AG04450 (cell line): ENCODE measurements at regions of chr14 and their contacts with region 1.

Region 1: DNA sequence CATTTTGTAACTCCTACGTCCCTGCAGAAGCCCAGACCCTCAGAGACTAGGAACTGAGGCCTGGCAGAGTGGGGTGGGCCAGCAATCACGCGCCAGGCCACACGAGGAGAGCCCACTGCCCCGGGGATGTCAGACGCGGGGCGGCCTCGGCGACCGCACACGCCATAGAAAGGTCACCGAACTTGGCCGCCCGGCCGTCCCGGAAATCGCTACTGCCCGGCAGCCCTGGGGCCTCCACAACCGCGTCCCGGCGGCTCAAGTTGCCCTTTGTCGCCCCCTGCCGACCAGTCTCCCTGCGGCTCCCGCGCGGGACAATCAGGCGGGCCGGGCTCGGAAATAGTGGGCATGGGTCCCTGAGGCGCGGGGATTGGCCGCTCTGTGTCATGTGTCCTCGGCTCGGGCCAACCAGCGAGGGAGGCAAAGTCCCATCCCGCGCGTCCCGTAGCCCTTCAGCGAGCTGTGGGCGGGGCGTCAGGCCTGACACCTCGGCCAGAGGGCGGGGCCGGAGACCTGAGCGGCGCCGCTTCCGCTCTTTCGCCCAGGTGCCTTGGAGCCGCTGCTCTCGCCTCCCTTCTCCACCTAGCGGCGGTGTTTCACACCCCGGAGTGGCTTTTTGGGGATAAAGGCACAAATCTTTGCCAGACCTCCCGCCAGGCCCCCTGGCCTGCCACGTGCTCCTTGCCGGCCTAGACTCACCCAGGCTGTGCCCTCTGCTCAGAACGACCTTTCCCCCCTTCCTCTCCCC is 33.4 kb upstream of the DEGS2 start:
- DNase-seq: peak; percentile 88
- H3K4me3 ChIP-seq: peak overlapping the region; percentile 58
- H3K27ac ChIP-seq: peak overlapping the region; percentile 31
- H3K27me3 ChIP-seq: no peaks in the 10 kb centered on the region
- CTCF ChIP-seq: peak; percentile 80

Region 2: GRCh38 chr14:99891900-99892299 is 300.9 kb before region 1 on chr14:
- CTCF ChIA-PET with region 1: no interaction called
- POLR2A ChIA-PET with region 1: no interaction called
- DNase-seq: no peak
- H3K4me3 ChIP-seq: no peak overlapping the region
- H3K27ac ChIP-seq: no peak overlapping the region
- H3K27me3 ChIP-seq: no peaks in the 10 kb centered on the region
- CTCF ChIP-seq: no peak

Region 3: DNA sequence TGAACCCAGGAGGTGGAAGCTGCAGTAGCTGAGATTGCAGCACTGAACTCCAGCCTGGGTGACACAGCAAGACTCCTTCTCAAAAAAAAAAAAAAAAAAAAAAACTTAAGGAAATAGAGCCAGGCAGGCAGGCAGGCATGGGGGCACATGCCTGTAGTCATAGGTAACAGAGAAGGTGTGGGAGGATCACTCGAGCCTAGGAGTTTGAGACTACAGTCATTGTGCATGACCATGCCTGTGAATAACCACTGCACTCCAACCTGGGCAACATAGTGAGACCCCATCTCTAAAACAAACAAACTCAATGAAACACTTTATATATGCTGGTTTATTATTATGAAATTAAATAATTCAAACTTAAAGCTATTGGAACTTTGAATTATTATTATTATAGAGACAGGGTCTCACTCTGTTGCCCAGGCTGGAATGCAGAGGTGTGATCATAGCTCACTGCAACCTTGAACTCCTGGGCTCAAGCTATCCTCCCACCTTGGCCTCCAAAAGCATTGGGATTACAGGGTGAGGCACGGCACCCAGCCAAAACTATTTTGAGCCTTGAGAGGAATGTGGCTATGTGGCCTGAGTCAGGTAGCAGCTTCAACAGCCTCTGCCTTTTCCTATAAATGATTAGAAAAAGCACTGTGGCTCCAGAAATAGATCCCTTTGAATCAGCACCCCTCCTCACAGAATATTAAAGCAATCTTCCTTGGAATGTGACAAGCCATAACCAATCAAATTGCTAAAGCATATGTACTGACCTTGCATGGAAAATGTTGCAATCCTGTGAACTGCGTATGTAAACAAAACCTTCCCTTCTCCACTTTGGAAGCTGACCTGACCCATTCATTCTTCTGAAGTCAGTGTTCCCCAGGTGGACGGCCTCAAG is 11.3 kb after region 1 on chr14:
- CTCF ChIA-PET with region 1: interaction called, 24 read pairs
- POLR2A ChIA-PET with region 1: interaction called, 3 read pairs
- DNase-seq: peak; percentile 37
- H3K4me3 ChIP-seq: no peak overlapping the region
- H3K27ac ChIP-seq: no peak overlapping the region
- H3K27me3 ChIP-seq: no peaks in the 10 kb centered on the region
- CTCF ChIP-seq: no peak

Region 4: DNA sequence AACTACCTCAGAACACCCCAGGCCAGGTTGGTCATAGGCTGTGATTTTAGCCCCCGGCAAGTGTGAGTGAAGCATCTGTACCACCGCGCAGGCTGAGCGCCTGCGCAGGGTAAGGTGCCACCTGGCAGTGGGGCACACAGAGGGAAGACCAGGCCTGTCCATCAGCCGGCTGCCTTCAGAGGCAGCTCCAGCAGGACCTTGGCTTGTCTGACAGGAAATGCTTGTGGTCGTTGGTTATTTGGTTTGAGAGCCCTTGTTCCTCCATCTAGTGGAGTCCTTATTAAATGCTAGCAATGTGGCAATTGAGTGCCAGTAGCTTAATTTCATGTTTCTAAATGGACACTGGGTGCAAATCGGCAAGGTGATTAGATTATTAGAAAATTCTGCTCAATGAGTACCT is 85.9 kb after region 1 on chr14:
- CTCF ChIA-PET with region 1: no interaction called
- POLR2A ChIA-PET with region 1: no interaction called
- DNase-seq: no peak
- H3K4me3 ChIP-seq: no peak overlapping the region
- H3K27ac ChIP-seq: peak overlapping the region; percentile 25
- H3K27me3 ChIP-seq: no peaks in the 10 kb centered on the region
- CTCF ChIP-seq: peak; percentile 45